CD4-positive, alpha-beta T cell (primary cell): ENCODE measurements at regions of chr4 and their contacts with region 1.

Region 1: GRCh38 chr4:38132107-38132673 is 172.0 kb downstream of the PTTG2 start:
- DNase-seq: peak; percentile 35 to 90 (median 54)
- ATAC-seq: peak; percentile 75
- H3K4me3 ChIP-seq: peak overlapping the region; percentile 6
- H3K4me3 Mint-ChIP-seq: peak overlapping the region; percentile 85
- H3K27ac ChIP-seq: peak overlapping the region; percentile 37 to 59
- H3K27ac Mint-ChIP-seq: peak overlapping the region; percentile 91
- H3K4me1 ChIP-seq: peaks cover 54% of the 10 kb centered on the region
- H3K4me1 Mint-ChIP-seq: peaks cover 53% of the 10 kb centered on the region
- H3K27me3 ChIP-seq: no peaks in the 10 kb centered on the region
- H3K27me3 Mint-ChIP-seq: no peaks in the 10 kb centered on the region
- CTCF ChIP-seq: no peak

Region 2: DNA sequence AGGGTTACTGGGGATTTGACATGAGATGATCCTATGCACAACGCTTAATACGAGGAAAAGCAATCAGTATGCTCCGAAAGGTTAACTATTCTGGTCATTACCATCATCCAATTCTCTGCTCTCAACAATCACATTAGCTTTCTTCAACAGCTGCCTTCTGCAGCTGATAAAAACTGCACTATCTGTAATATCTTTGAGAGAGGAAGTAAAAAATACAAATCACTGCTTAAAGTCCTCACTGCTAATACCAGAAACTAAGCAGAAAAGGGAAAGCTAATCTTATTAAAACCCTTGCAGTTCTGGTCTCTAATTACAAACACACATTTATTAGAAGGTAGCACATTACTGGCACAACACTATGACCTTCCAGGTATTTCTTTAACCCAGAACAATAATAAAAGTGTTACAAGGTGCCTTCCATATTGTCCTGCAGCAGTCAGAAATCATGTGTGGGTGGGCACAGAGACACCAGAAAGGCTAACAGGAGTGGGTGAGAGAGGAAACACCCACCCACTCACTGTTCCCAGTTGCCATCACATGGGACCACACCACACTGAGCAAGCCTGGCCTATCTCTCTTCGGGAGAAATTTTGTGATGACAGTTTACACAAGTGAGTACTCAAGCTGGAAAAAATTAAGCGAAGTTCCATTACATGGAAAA is 517.0 kb before region 1 on chr4:
- CTCF ChIA-PET with region 1: no interaction called
- POLR2A ChIA-PET with region 1: no interaction called
- intact Hi-C with region 1: no loop called
- DNase-seq: no peak
- ATAC-seq: no peak
- H3K4me3 ChIP-seq: no peak overlapping the region
- H3K4me3 Mint-ChIP-seq: no peak overlapping the region
- H3K27ac ChIP-seq: no peak overlapping the region
- H3K27ac Mint-ChIP-seq: peak overlapping the region; percentile 6
- H3K4me1 ChIP-seq: no peaks in the 10 kb centered on the region
- H3K4me1 Mint-ChIP-seq: peaks cover 7% of the 10 kb centered on the region
- H3K27me3 ChIP-seq: no peaks in the 10 kb centered on the region
- H3K27me3 Mint-ChIP-seq: no peaks in the 10 kb centered on the region
- CTCF ChIP-seq: no peak

Region 3: GRCh38 chr4:38160487-38161207 is 28.5 kb after region 1 on chr4:
- CTCF ChIA-PET with region 1: interaction called, 3 read pairs
- POLR2A ChIA-PET with region 1: interaction called, 8 read pairs
- intact Hi-C with region 1: loop called in 1 of 2 experiments (anchors 2 kb)
- DNase-seq: peak in 12 of 14 experiments; percentile 10 to 88 (median 32)
- ATAC-seq: peak; percentile 87
- H3K4me3 ChIP-seq: no peak overlapping the region
- H3K4me3 Mint-ChIP-seq: no peak overlapping the region
- H3K27ac ChIP-seq: peak overlapping the region in 1 of 2 donors; percentile 53
- H3K27ac Mint-ChIP-seq: peak overlapping the region; percentile 67
- H3K4me1 ChIP-seq: peaks cover 28% of the 10 kb centered on the region
- H3K4me1 Mint-ChIP-seq: peaks cover 52% of the 10 kb centered on the region
- H3K27me3 ChIP-seq: no peaks in the 10 kb centered on the region
- H3K27me3 Mint-ChIP-seq: no peaks in the 10 kb centered on the region
- CTCF ChIP-seq: no peak